HEK293 (cell line): ENCODE measurements at regions of chr21 and their contacts with region 1.

Region 1: DNA sequence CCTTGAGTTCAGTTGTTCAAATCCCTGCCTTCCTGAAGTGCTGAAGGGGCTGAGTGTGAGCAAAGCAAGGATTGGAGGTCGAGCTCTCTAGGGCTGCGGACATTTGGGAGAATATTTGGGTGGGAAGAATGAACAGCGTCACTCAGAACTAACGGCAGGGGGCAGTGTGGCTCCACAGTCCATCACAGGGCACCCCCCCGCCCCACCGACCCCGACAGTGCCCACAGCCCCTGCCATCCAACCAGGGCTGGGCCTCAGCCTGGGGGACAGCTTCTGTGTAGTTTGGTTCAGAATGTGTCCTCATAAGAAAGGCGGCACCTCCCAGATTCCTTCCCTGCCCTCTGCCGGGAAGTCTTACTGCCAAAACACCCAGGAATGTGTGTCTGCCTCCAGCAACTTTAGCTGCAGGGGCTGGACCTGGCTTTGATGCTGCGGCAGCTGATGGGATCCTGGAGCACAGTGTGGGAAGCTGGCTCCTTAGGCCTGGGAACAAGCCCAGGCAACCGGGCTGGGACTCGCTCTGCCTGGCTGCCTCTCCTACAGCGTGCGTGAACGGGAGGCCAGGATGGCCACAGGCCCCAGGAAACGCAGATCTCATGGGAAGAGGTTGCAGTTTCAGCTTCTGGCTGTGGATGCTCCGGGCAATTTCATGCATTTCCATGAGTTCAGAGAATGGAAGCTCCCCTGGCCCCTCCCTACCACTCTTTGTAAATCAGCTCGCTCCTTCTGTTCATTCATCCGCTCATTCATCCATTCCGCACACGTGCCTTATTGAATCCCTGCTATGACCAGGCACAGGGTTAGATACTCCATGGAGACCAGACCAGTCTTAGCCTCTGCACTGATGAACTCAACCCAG is 104.9 kb upstream of the TMPRSS2 start:
- H3K4me3 ChIP-seq: no peak overlapping the region
- H3K27ac ChIP-seq: no peak overlapping the region
- H3K4me1 ChIP-seq: no peaks in the 10 kb centered on the region
- CTCF ChIP-seq: peak; percentile 72

Region 2: GRCh38 chr21:41622831-41623548 is 10.1 kb after region 1 on chr21:
- CTCF ChIA-PET with region 1: interaction called, 28 read pairs
- POLR2A ChIA-PET with region 1: no interaction called
- H3K4me3 ChIP-seq: no peak overlapping the region
- H3K27ac ChIP-seq: no peak overlapping the region
- H3K4me1 ChIP-seq: no peaks in the 10 kb centered on the region
- CTCF ChIP-seq: no peak

Region 3: DNA sequence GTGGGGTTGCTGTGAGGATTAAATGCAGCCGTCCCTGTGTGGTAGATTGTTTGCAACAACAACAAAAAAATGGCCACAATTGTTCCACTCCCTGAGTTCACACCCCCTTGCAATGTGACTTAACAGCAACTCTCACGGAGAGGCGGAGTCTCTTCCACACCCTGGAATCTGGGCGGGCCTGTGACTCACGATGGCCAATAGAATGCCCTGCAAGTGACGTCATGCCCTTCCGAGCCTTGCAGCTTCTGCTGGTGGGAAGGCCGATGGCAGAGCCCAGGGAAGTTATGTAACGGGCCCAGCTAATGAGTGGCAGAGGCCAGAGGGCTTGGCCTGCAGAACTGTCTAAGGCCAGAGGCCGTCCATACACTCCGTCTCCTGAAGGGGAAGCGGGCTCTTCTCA is 66.0 kb after region 1 on chr21:
- CTCF ChIA-PET with region 1: interaction called, 25 read pairs
- POLR2A ChIA-PET with region 1: no interaction called
- H3K4me3 ChIP-seq: no peak overlapping the region
- H3K27ac ChIP-seq: peak overlapping the region; percentile 18; the same call in 1 of the 2 replicates
- H3K4me1 ChIP-seq: peaks cover 7% of the 10 kb centered on the region
- CTCF ChIP-seq: no peak

Region 4: DNA sequence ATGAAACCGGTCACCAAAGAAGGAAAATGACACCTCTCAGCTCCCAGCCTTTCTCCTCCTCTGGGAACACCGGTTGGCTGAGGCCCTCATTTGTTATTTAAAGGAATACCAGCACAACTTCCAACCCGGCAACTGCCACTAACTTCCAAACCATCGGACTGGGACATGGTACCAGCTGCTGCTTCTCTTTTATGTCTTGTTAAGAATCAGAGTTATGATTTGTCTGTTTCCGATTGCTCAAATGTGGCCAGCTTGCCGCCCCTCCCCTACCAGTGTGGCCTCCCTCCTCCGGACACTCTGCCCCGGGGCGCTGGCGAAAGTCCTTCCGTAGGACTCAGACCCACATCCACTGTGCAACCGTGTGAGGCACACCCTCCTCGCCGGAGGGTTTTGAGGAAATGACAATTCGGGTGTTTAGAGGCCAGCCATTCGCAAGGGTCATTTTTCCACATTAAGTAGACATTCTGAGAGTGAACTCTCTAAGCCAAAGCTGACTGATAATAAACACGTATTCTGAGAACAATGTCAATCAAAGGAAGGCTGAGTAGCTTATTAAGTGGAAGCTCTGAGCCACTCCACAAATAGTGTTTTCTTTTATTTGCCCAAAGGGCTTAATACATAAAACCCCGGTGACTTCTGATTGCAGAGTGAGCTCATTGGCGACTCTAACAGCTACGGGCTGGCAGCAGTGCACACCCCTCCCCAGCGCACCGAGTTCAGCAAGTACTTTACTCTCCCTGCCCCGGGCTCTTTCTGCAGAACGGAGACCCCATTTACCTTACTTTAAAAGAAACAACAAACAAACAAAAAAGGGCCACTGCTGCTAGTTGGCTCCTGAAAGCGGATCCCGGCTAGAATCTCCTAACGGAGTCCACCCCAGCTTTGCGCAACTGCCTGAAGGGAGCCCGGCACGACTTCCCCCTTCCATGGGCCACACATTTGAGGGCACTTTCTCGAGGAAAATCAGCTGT is 148.6 kb after region 1 on chr21:
- CTCF ChIA-PET with region 1: interaction called, 13 read pairs
- POLR2A ChIA-PET with region 1: interaction called, 4 read pairs
- H3K4me3 ChIP-seq: peak overlapping the region; percentile 3; the same call in 1 of the 2 replicates
- H3K27ac ChIP-seq: peak overlapping the region; percentile 16; the same call in 1 of the 2 replicates
- H3K4me1 ChIP-seq: peaks cover 31% of the 10 kb centered on the region
- CTCF ChIP-seq: no peak

Region 5: GRCh38 chr21:41783441-41784161 is 170.7 kb after region 1 on chr21:
- CTCF ChIA-PET with region 1: interaction called, 164 read pairs
- POLR2A ChIA-PET with region 1: interaction called, 8 read pairs
- H3K4me3 ChIP-seq: no peak overlapping the region
- H3K27ac ChIP-seq: peak overlapping the region; percentile 39
- H3K4me1 ChIP-seq: peaks cover 29% of the 10 kb centered on the region
- CTCF ChIP-seq: no peak

Region 6: GRCh38 chr21:41847066-41847804 is 234.3 kb after region 1 on chr21:
- CTCF ChIA-PET with region 1: interaction called, 10 read pairs
- POLR2A ChIA-PET with region 1: no interaction called
- H3K4me3 ChIP-seq: no peak overlapping the region
- H3K27ac ChIP-seq: no peak overlapping the region
- H3K4me1 ChIP-seq: no peaks in the 10 kb centered on the region
- CTCF ChIP-seq: no peak